Breast epithelium (tissue), 4 donors: ENCODE measurements at regions of chr3 and their contacts with region 1.

Region 1: GRCh38 chr3:177615015-177615414 is 417.7 kb upstream of the TBL1XR1 start:
- DNase-seq: peak; percentile 60 to 83
- H3K4me3 ChIP-seq: no peak overlapping the region
- H3K27ac ChIP-seq: peak overlapping the region; percentile 26 to 41
- H3K4me1 ChIP-seq: peaks cover 0 to 26% of the 10 kb centered on the region in 2 donors
- H3K27me3 ChIP-seq: no peaks in the 10 kb centered on the region
- CTCF ChIP-seq: no peak
- POLR2A ChIP-seq: no peak

Region 2: GRCh38 chr3:177498037-177498856 is 116.8 kb before region 1 on chr3:
- intact Hi-C with region 1: no loop called
- DNase-seq: no peak
- H3K4me3 ChIP-seq: peak overlapping the region in 1 of 3 donors; percentile 2
- H3K27ac ChIP-seq: peak overlapping the region in 1 of 2 donors; percentile 32
- H3K4me1 ChIP-seq: no peaks in the 10 kb centered on the region
- H3K27me3 ChIP-seq: no peaks in the 10 kb centered on the region
- CTCF ChIP-seq: no peak
- POLR2A ChIP-seq: no peak

Region 3: GRCh38 chr3:177561769-177562392 is 53.1 kb before region 1 on chr3:
- intact Hi-C with region 1: loop called (anchors 2 kb)
- DNase-seq: no peak
- H3K4me3 ChIP-seq: no peak overlapping the region
- H3K27ac ChIP-seq: no peak overlapping the region
- H3K4me1 ChIP-seq: no peaks in the 10 kb centered on the region
- H3K27me3 ChIP-seq: no peaks in the 10 kb centered on the region
- CTCF ChIP-seq: no peak
- POLR2A ChIP-seq: no peak